ENCODE measurements at regions of chr17 and their contacts with region 1.

Region 1: DNA sequence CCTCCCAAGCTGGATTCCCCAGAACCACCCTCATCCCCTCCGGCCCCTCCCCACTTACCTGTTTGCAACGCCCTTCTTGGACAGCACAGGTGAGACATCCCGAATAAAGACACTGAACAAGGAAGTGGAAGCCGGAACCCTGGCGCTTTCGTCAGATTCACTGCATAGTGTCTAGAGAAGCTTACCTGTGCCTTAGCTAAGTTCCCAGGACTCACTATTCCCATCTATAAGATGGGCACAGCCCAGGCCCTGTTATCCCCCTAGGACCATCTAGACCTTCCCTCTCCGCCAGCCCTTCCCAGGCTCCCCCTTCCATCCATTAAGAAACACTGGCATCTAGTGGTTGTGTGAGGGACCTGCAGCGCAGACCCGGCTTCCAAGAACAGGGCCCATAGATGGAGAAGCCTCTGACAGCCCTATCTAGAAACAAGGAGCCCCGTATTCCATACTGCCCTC is 26.9 kb upstream of the RPL38 start:
- DNase-seq: peak; percentile 82
- H3K4me3 ChIP-seq: no peak overlapping the region
- H3K27ac ChIP-seq: no peak overlapping the region
- H3K4me1 ChIP-seq: no peaks in the 10 kb centered on the region
- H3K27me3 ChIP-seq: no peaks in the 10 kb centered on the region
- CTCF ChIP-seq: peak; percentile 88

Region 2: DNA sequence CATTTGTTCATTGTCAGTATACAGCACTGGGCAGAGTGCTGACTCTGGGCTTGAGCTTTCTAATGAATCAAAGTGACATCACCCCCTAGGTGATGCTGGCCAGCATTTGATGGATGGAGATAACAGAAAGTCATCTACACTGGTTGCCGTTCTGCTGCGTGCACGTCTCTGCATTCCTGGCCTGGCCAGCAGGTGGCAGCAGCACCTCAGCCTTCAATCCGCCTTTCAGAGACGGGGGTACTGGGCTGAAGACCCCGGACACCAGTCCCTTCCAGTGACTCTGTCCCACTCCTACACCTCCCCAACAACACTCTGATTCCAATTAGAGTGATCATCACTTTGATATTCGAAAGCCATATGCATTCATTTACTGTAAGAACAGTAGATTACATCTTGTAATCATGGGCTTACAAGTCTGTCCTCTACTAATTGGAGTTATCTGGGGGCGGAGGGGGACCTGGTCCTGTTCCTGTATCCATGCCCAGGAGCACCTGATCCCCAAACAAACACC is 920.8 kb before region 1 on chr17:
- CTCF ChIA-PET with region 1: no interaction called
- POLR2A ChIA-PET with region 1: no interaction called
- intact Hi-C with region 1: loop called (anchors 5 kb)
- DNase-seq: peak; percentile 53
- H3K4me3 ChIP-seq: no peak overlapping the region
- H3K27ac ChIP-seq: no peak overlapping the region
- H3K4me1 ChIP-seq: no peaks in the 10 kb centered on the region
- H3K27me3 ChIP-seq: no peaks in the 10 kb centered on the region
- CTCF ChIP-seq: peak; percentile 97

Region 3: GRCh38 chr17:73429440-73430164 is 747.0 kb before region 1 on chr17:
- CTCF ChIA-PET with region 1: interaction called, 3 read pairs
- POLR2A ChIA-PET with region 1: no interaction called
- intact Hi-C with region 1: loop called (anchors 1 kb)
- DNase-seq: peak; percentile 87
- H3K4me3 ChIP-seq: no peak overlapping the region
- H3K27ac ChIP-seq: no peak overlapping the region
- H3K4me1 ChIP-seq: peaks cover 15% of the 10 kb centered on the region
- H3K27me3 ChIP-seq: no peaks in the 10 kb centered on the region
- CTCF ChIP-seq: peak; percentile 97

Region 4: GRCh38 chr17:73657473-73658116 is 519.0 kb before region 1 on chr17:
- CTCF ChIA-PET with region 1: no interaction called
- POLR2A ChIA-PET with region 1: no interaction called
- intact Hi-C with region 1: loop called (anchors 2 kb)
- DNase-seq: peak; percentile 64
- H3K4me3 ChIP-seq: no peak overlapping the region
- H3K27ac ChIP-seq: no peak overlapping the region
- H3K4me1 ChIP-seq: no peaks in the 10 kb centered on the region
- H3K27me3 ChIP-seq: peaks cover 18% of the 10 kb centered on the region
- CTCF ChIP-seq: peak; percentile 76

Region 5: GRCh38 chr17:73820686-73821448 is 355.7 kb before region 1 on chr17:
- CTCF ChIA-PET with region 1: no interaction called
- POLR2A ChIA-PET with region 1: no interaction called
- intact Hi-C with region 1: loop called (anchors 2 kb)
- DNase-seq: peak; percentile 91
- H3K4me3 ChIP-seq: no peak overlapping the region
- H3K27ac ChIP-seq: no peak overlapping the region
- H3K4me1 ChIP-seq: peaks cover 12% of the 10 kb centered on the region
- H3K27me3 ChIP-seq: no peaks in the 10 kb centered on the region
- CTCF ChIP-seq: peak; percentile 53

Region 6: GRCh38 chr17:73998653-73999645 is 177.6 kb before region 1 on chr17:
- CTCF ChIA-PET with region 1: no interaction called
- POLR2A ChIA-PET with region 1: no interaction called
- intact Hi-C with region 1: no loop called
- DNase-seq: peak; percentile 10
- H3K4me3 ChIP-seq: no peak overlapping the region
- H3K27ac ChIP-seq: no peak overlapping the region
- H3K4me1 ChIP-seq: no peaks in the 10 kb centered on the region
- H3K27me3 ChIP-seq: no peaks in the 10 kb centered on the region
- CTCF ChIP-seq: peak; percentile 58

Region 7: DNA sequence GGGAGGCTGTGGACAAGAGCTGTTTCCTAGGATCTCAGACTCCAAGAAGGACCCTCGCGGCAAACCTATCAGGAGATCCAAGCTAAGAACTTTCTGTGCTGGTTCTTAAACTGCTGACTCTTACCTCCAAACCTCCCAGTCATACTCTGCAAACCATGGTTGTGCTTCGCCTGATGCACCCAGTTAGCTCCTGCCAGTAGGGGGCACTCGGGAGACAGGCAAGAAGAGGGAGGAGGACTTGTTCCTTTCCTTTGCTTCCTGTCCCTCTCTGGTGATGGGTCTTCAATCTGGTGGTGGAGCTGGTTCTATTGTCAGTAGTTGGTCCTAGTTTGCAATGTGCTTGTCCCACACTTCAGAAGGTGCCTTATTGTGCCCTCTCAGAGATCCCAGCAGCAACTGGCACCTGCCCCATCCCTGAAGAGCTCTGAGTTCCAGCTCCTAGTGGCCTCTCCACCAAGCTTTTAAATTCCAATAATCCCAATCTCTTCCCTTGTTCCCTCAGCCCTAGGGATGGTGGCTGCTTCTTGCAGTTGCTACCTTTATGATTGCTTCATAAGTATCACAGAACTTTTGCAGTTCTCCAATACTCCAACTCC is 86.6 kb before region 1 on chr17:
- CTCF ChIA-PET with region 1: interaction called, 3 read pairs
- POLR2A ChIA-PET with region 1: no interaction called
- intact Hi-C with region 1: loop called (anchors 2 kb)
- DNase-seq: peak; percentile 78
- H3K4me3 ChIP-seq: no peak overlapping the region
- H3K27ac ChIP-seq: no peak overlapping the region
- H3K4me1 ChIP-seq: no peaks in the 10 kb centered on the region
- H3K27me3 ChIP-seq: no peaks in the 10 kb centered on the region
- CTCF ChIP-seq: peak; percentile 91

Region 8: GRCh38 chr17:74163271-74163821 is 13.2 kb before region 1 on chr17:
- CTCF ChIA-PET with region 1: no interaction called
- POLR2A ChIA-PET with region 1: no interaction called
- intact Hi-C with region 1: no loop called
- DNase-seq: peak; percentile 26
- H3K4me3 ChIP-seq: no peak overlapping the region
- H3K27ac ChIP-seq: no peak overlapping the region
- H3K4me1 ChIP-seq: no peaks in the 10 kb centered on the region
- H3K27me3 ChIP-seq: peaks cover 3% of the 10 kb centered on the region
- CTCF ChIP-seq: no peak

Region 9: GRCh38 chr17:74190807-74191406 is 14.3 kb after region 1 on chr17:
- CTCF ChIA-PET with region 1: no interaction called
- POLR2A ChIA-PET with region 1: interaction called, 24 read pairs
- intact Hi-C with region 1: no loop called
- DNase-seq: no peak
- H3K4me3 ChIP-seq: no peak overlapping the region
- H3K27ac ChIP-seq: no peak overlapping the region
- H3K4me1 ChIP-seq: no peaks in the 10 kb centered on the region
- H3K27me3 ChIP-seq: peaks cover 19% of the 10 kb centered on the region
- CTCF ChIP-seq: no peak

Region 10: DNA sequence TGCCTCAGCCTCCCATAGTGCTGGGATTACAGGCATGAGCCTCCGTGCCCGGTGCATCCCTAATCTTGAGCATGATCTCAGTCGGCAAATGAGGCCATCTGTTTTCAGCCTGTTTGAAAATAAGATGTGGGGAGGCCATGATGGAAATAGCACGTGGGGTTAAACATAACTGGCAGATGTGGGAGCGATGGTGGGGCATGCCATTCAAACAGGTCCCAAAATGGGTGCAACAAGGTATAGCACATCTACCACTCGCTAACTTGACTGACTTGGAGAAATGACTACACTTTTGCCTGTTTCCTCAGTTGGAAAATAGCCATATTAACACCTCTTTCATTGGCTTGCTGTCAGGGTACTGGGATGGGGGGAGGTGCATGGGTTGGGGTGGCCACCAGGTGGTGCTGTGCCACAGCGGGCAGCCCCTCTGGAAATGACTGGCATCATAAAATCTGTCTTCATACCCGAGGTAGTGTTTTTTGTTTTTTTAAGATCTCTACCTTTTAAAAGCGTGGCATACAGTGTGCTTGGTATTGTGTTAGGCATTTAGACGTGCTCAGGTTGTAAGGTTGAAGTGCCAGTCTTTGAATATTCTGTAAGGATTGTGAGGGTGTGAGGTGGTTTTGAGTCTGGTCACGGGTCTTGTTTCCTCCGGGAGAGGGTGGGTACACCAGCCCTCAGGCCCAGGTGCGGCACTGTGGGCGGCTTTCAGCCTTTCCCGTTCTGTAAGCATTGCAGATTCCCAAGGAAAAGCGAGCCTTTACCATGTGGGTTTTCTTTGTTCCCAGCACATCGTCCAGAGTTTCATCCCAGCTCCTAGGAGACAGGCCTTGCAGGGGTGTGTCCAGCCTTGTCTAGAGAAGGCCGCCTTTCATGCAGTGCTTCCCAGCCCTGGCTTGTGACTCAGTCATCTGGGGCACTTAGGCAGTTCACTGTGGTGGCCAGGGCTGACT is 33.9 kb after region 1 on chr17:
- CTCF ChIA-PET with region 1: no interaction called
- POLR2A ChIA-PET with region 1: no interaction called
- intact Hi-C with region 1: no loop called
- DNase-seq: peak; percentile 74
- H3K4me3 ChIP-seq: no peak overlapping the region
- H3K27ac ChIP-seq: no peak overlapping the region
- H3K4me1 ChIP-seq: peaks cover 23% of the 10 kb centered on the region
- H3K27me3 ChIP-seq: no peaks in the 10 kb centered on the region
- CTCF ChIP-seq: peak; percentile 98